WTC11 (cell line): ENCODE measurements at regions of chr4 and their contacts with region 1.

Region 1: GRCh38 chr4:173334085-173334772 is at the start of gene HMGB2:
- DNase-seq: peak; percentile 100
- ATAC-seq: peak; percentile 87
- H3K4me3 Mint-ChIP-seq: peak within 1 kb of the TSS; percentile 97
- H3K27ac Mint-ChIP-seq: peak within 1 kb of the TSS; percentile 100
- H3K4me1 Mint-ChIP-seq: peaks cover 36% of the 10 kb centered on the region
- H3K27me3 Mint-ChIP-seq: no peaks in the 10 kb centered on the region
- CTCF ChIP-seq: no peak
- total RNA-seq, gene HMGB2: 279 to 294 TPM (median 288 TPM) in 3 replicates

Region 2: GRCh38 chr4:173168396-173169177 is 165.6 kb before region 1 on chr4 and contains the start of gene GALNT7:
- CTCF ChIA-PET with region 1: no interaction called
- POLR2A ChIA-PET with region 1: interaction called, 13 read pairs
- DNase-seq: peak; percentile 87
- ATAC-seq: peak; percentile 81
- H3K4me3 Mint-ChIP-seq: peak within 1 kb of the TSS; percentile 88
- H3K27ac Mint-ChIP-seq: peak within 1 kb of the TSS; percentile 98
- H3K4me1 Mint-ChIP-seq: peaks cover 50% of the 10 kb centered on the region
- H3K27me3 Mint-ChIP-seq: no peaks in the 10 kb centered on the region
- CTCF ChIP-seq: no peak
- total RNA-seq, gene GALNT7: 79.9 to 86.9 TPM (median 82.8 TPM) in 3 replicates

Region 3: GRCh38 chr4:173360587-173361221 is 26.5 kb after region 1 on chr4:
- CTCF ChIA-PET with region 1: interaction called, 4 read pairs
- POLR2A ChIA-PET with region 1: interaction called, 13 read pairs
- DNase-seq: no peak
- ATAC-seq: peak; percentile 89
- H3K4me3 Mint-ChIP-seq: no peak overlapping the region
- H3K27ac Mint-ChIP-seq: no peak overlapping the region
- H3K4me1 Mint-ChIP-seq: peaks cover 3% of the 10 kb centered on the region
- H3K27me3 Mint-ChIP-seq: no peaks in the 10 kb centered on the region
- CTCF ChIP-seq: no peak

Region 4: GRCh38 chr4:173370477-173371291 is 36.5 kb after region 1 on chr4 and contains the start of gene SAP30:
- CTCF ChIA-PET with region 1: interaction called, 7 read pairs
- POLR2A ChIA-PET with region 1: interaction called, 109 read pairs
- DNase-seq: peak; percentile 98
- ATAC-seq: peak; percentile 86
- H3K4me3 Mint-ChIP-seq: peak within 1 kb of the TSS; percentile 100
- H3K27ac Mint-ChIP-seq: peak within 1 kb of the TSS; percentile 100
- H3K4me1 Mint-ChIP-seq: peaks cover 22% of the 10 kb centered on the region
- H3K27me3 Mint-ChIP-seq: peaks cover 7% of the 10 kb centered on the region
- CTCF ChIP-seq: no peak
- total RNA-seq, gene SAP30: 20.0 to 21.1 TPM (median 20.0 TPM) in 3 replicates

Region 5: DNA sequence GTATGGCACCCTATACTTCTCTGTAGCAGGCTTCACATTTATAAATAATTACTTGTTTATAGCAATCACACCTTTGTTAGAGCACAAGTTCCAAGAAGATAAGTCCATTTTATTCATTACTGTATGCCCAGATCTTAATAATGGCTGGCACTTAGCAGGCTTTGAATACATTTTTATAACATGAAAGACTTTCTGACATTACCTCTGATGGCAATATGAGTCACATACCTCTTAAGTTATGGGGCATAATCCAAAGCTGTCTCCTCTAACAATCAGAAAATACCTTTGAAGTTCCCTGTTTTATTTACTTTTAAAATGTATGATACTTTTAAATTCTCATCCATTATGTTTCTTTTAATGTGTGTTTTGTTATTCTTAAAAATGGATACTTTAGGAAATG is 52.5 kb after region 1 on chr4:
- CTCF ChIA-PET with region 1: no interaction called
- POLR2A ChIA-PET with region 1: interaction called, 10 read pairs
- DNase-seq: no peak
- ATAC-seq: no peak
- H3K4me3 Mint-ChIP-seq: no peak overlapping the region
- H3K27ac Mint-ChIP-seq: no peak overlapping the region
- H3K4me1 Mint-ChIP-seq: peaks cover 10% of the 10 kb centered on the region
- H3K27me3 Mint-ChIP-seq: no peaks in the 10 kb centered on the region
- CTCF ChIP-seq: no peak

Region 6: GRCh38 chr4:173436149-173436579 is 101.9 kb after region 1 on chr4:
- CTCF ChIA-PET with region 1: no interaction called
- POLR2A ChIA-PET with region 1: no interaction called
- DNase-seq: no peak
- ATAC-seq: peak; percentile 65
- H3K4me3 Mint-ChIP-seq: no peak overlapping the region
- H3K27ac Mint-ChIP-seq: no peak overlapping the region
- H3K4me1 Mint-ChIP-seq: peaks cover 8% of the 10 kb centered on the region
- H3K27me3 Mint-ChIP-seq: peaks cover 5% of the 10 kb centered on the region; the same call in 1 of the 2 replicates
- CTCF ChIP-seq: no peak

Region 7: DNA sequence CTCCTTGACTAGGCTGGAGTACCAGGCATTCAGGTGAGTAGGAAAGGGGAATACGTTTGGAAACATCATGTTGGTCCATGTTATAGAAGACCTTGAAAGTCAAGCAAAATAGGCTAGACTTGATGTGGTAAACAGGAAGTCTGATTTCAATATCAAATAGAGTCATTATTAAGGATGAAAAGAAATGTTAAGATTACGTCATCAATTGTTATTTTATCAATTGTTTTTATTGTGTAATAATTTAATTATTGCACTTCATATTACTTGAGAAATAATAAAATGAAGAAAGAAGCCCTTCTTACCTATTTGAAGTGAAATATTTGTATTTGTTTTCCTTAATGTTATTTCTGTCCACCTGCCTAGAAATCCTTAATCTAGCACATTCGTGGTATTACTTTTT is 556.8 kb after region 1 on chr4:
- CTCF ChIA-PET with region 1: no interaction called
- POLR2A ChIA-PET with region 1: no interaction called
- DNase-seq: no peak
- ATAC-seq: no peak
- H3K4me3 Mint-ChIP-seq: no peak overlapping the region
- H3K27ac Mint-ChIP-seq: no peak overlapping the region
- H3K4me1 Mint-ChIP-seq: no peaks in the 10 kb centered on the region
- H3K27me3 Mint-ChIP-seq: no peaks in the 10 kb centered on the region
- CTCF ChIP-seq: no peak